ENCODE measurements at regions of chr12 and their contacts with region 1.

Region 1: GRCh38 chr12:10395390-10395998 is 5.7 kb upstream of the KLRK1 start:
- DNase-seq: peak in 3 of 9 experiments; percentile 32 to 89 (median 78)
- ATAC-seq: peak; percentile 66
- H3K4me3 ChIP-seq: peak overlapping the region; percentile 30 to 37
- H3K4me3 Mint-ChIP-seq: peak overlapping the region; percentile 63
- H3K27ac ChIP-seq: peak overlapping the region; percentile 95 to 97
- H3K27ac Mint-ChIP-seq: peak overlapping the region; percentile 96
- H3K4me1 ChIP-seq: peaks cover 88% of the 10 kb centered on the region
- H3K4me1 Mint-ChIP-seq: peaks cover 68% of the 10 kb centered on the region
- H3K27me3 ChIP-seq: no peaks in the 10 kb centered on the region
- H3K27me3 Mint-ChIP-seq: no peaks in the 10 kb centered on the region
- CTCF ChIP-seq: no peak

Region 2: DNA sequence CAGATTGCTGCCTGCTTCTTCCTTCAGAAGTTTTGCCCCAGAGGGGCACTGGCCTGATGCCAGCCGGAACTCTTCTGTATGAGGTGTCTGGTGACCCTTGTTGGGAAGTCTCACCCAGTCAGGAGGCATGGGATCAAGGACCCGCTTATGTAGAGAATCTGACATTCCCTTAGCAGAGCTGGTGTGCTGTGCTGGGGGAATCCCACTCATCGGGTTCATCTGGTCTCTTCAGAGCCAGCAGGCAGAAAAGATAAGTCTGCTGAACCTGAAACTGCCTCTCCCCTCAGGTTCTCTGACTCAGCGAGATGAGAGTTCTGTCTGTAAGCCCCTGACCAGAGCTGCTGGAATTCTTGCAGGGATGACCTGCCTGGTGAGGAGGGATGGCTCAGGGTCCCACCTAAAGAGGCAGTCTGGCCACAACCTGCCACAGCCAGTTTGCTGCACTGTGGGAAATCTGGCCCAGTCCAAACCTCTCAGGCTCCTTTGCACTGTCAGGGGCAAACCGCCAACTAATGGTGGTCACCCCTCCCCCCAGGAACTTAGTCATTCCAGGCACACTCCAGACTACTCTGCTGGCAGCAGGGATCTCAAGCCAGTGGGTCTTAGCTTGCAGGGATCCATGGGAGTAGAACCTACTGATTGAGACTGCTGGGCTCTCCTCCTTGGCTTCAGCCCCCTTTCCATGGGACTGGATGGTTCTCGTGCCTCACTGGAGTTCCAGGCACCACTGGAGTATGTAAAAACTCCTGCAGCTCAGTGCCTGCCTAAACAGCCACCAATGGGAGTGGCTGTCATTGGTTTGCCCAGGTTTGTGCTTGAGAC is 721.9 kb before region 1 on chr12:
- CTCF ChIA-PET with region 1: no interaction called
- POLR2A ChIA-PET with region 1: no interaction called
- intact Hi-C with region 1: loop called (anchors 10 kb)
- DNase-seq: peak in 7 of 9 experiments; percentile 44 to 82 (median 63)
- ATAC-seq: peak; percentile 37
- H3K4me3 ChIP-seq: peak overlapping the region; percentile 50 to 68
- H3K4me3 Mint-ChIP-seq: peak overlapping the region; percentile 88
- H3K27ac ChIP-seq: peak overlapping the region; percentile 42 to 74
- H3K27ac Mint-ChIP-seq: peak overlapping the region; percentile 95
- H3K4me1 ChIP-seq: peaks cover 44% of the 10 kb centered on the region
- H3K4me1 Mint-ChIP-seq: peaks cover 76% of the 10 kb centered on the region
- H3K27me3 ChIP-seq: no peaks in the 10 kb centered on the region
- H3K27me3 Mint-ChIP-seq: no peaks in the 10 kb centered on the region
- CTCF ChIP-seq: no peak

Region 3: DNA sequence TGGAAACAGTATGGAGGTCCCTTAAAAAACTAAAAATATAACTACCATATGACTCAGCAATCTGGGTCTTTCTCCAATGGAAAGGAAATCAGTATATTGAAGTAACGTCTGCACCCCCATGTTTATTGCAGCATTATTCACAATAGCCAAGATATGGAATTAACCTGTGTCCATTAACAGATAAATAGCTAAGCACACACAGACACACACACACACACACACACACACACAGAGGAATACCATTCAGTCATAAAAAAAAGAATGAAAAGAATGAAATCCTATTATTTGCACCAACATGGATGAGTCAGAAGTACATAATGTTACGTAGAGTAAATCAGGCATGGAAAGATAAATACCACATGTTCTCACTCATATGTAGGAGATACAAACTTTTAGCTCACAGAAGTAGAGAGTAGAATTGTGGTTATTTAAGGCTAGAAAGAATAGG is 10.3 kb before region 1 on chr12:
- CTCF ChIA-PET with region 1: interaction called, 4 read pairs
- POLR2A ChIA-PET with region 1: interaction called, 23 read pairs
- intact Hi-C with region 1: loop called in 1 of 2 experiments (anchors 1 kb)
- DNase-seq: peak in 1 of 9 experiments; percentile 57
- ATAC-seq: peak; percentile 57
- H3K4me3 ChIP-seq: peak overlapping the region; percentile 61 to 68
- H3K4me3 Mint-ChIP-seq: peak overlapping the region; percentile 87
- H3K27ac ChIP-seq: peak overlapping the region; percentile 50 to 97
- H3K27ac Mint-ChIP-seq: peak overlapping the region; percentile 92
- H3K4me1 ChIP-seq: peaks cover 25% of the 10 kb centered on the region
- H3K4me1 Mint-ChIP-seq: peaks cover 58% of the 10 kb centered on the region
- H3K27me3 ChIP-seq: no peaks in the 10 kb centered on the region
- H3K27me3 Mint-ChIP-seq: no peaks in the 10 kb centered on the region
- CTCF ChIP-seq: no peak

Region 4: DNA sequence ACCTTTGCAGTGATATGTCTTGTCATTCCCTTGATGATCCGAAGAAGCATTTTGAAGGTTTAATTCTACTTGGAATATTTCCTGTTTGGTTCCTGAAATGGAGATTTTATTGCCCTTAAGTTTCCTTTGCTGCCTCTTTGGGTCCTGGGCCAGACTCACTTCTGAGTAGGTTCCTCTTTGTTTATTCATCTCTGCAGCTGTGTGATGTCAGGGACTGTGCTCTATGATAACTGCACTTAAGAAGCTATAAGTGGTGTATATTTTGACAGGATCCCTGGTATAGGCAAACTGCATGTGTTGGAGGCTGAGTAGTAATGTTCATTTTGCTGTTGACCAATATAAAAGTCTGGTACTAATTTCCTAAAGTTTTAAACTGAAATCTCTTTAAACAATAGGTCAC is 13.9 kb after region 1 on chr12 and contains the start of gene KLRC4:
- CTCF ChIA-PET with region 1: no interaction called
- POLR2A ChIA-PET with region 1: interaction called, 13 read pairs
- intact Hi-C with region 1: loop called in 1 of 2 experiments (anchors 1 kb)
- DNase-seq: peak in 5 of 9 experiments; percentile 19 to 56 (median 37)
- ATAC-seq: peak; percentile 75
- H3K4me3 ChIP-seq: peak within 1 kb of the TSS; percentile 23 to 62
- H3K4me3 Mint-ChIP-seq: peak within 1 kb of the TSS; percentile 86
- H3K27ac ChIP-seq: peak within 1 kb of the TSS in 1 of 2 experiments; percentile 66
- H3K27ac Mint-ChIP-seq: peak within 1 kb of the TSS; percentile 89
- H3K4me1 ChIP-seq: peaks cover 15% of the 10 kb centered on the region
- H3K4me1 Mint-ChIP-seq: peaks cover 26% of the 10 kb centered on the region
- H3K27me3 ChIP-seq: no peaks in the 10 kb centered on the region
- H3K27me3 Mint-ChIP-seq: no peaks in the 10 kb centered on the region
- CTCF ChIP-seq: no peak
- total RNA-seq, gene KLRC4: 14.3 to 16.0 TPM

Region 5: GRCh38 chr12:10501031-10501430 is 105.5 kb after region 1 on chr12:
- CTCF ChIA-PET with region 1: interaction called, 3 read pairs
- POLR2A ChIA-PET with region 1: interaction called, 3 read pairs
- intact Hi-C with region 1: loop called in 1 of 2 experiments (anchors 2 kb)
- DNase-seq: peak in 2 of 9 experiments; percentile 36 to 59
- ATAC-seq: no peak
- H3K4me3 ChIP-seq: no peak overlapping the region
- H3K4me3 Mint-ChIP-seq: peak overlapping the region; percentile 57
- H3K27ac ChIP-seq: no peak overlapping the region
- H3K27ac Mint-ChIP-seq: peak overlapping the region; percentile 82
- H3K4me1 ChIP-seq: peaks cover 56% of the 10 kb centered on the region
- H3K4me1 Mint-ChIP-seq: peaks cover 51% of the 10 kb centered on the region
- H3K27me3 ChIP-seq: no peaks in the 10 kb centered on the region
- H3K27me3 Mint-ChIP-seq: no peaks in the 10 kb centered on the region
- CTCF ChIP-seq: no peak

Region 6: DNA sequence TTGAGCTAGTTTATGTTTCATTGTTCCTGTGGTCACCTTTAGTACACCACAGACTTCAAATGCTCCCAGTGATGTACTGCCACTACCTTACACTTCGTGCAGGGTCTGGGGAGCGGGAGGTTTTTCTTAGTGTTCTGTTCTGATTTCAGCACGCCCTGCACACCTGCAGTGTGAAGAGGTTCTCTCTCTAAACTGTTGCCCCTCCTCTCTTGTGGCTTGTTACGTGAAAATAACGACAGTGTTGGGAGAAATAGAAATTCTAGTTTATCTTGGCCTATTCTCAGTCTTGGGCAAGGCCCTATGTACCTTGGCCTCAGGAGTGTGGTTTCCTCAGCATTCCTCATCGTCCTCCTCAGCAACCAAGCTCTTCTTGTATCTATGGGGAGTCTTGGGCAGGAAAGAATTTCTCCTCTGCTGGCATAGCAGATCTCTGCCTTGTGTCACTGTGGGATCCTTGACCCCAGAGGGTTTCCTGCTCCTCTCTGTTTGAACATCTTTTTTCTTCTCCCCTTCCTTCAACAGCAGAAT is 158.8 kb after region 1 on chr12:
- CTCF ChIA-PET with region 1: interaction called, 5 read pairs
- POLR2A ChIA-PET with region 1: interaction called, 66 read pairs
- intact Hi-C with region 1: loop called in 1 of 2 experiments (anchors 2 kb)
- DNase-seq: peak in 8 of 9 experiments; percentile 29 to 85 (median 70)
- ATAC-seq: peak; percentile 64
- H3K4me3 ChIP-seq: peak overlapping the region; percentile 61 to 64
- H3K4me3 Mint-ChIP-seq: peak overlapping the region; percentile 90
- H3K27ac ChIP-seq: peak overlapping the region; percentile 80 to 95
- H3K27ac Mint-ChIP-seq: peak overlapping the region; percentile 100
- H3K4me1 ChIP-seq: peaks cover 32% of the 10 kb centered on the region
- H3K4me1 Mint-ChIP-seq: peaks cover 61% of the 10 kb centered on the region
- H3K27me3 ChIP-seq: no peaks in the 10 kb centered on the region
- H3K27me3 Mint-ChIP-seq: no peaks in the 10 kb centered on the region
- CTCF ChIP-seq: no peak

Region 7: DNA sequence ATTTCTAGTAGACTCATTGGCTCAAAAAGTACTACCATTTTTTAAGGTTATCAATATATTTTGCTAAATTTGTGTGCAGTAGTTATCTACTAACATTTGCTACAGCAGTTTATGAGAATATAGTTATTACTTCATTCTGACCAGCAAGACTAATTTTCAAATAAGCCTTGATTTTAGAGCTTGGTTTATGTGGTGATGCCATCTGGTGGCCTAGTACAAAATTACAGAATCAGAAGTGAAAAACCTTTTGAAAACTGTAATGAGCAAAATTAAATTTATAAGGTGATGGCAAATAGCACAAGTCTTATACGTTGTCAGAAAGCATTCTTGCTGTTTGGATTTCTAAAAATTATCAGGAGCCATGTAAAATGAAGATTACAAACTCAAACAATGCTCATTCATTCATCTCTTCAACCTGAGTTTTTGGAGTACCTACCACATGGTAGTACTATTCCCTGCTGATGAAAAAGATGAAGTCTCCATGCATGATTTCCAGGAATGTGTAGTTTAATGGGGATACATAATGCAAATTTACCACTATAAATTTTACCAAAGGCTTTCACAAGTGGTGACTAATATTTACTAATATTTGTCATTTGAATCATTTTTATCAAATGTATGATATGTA is 166.9 kb after region 1 on chr12:
- CTCF ChIA-PET with region 1: interaction called, 5 read pairs
- POLR2A ChIA-PET with region 1: interaction called, 11 read pairs
- intact Hi-C with region 1: loop called in 1 of 2 experiments (anchors 2 kb)
- DNase-seq: peak in 4 of 9 experiments; percentile 29 to 79 (median 62)
- ATAC-seq: no peak
- H3K4me3 ChIP-seq: no peak overlapping the region
- H3K4me3 Mint-ChIP-seq: peak overlapping the region; percentile 11
- H3K27ac ChIP-seq: no peak overlapping the region
- H3K27ac Mint-ChIP-seq: peak overlapping the region; percentile 80
- H3K4me1 ChIP-seq: peaks cover 70% of the 10 kb centered on the region
- H3K4me1 Mint-ChIP-seq: peaks cover 83% of the 10 kb centered on the region
- H3K27me3 ChIP-seq: no peaks in the 10 kb centered on the region
- H3K27me3 Mint-ChIP-seq: no peaks in the 10 kb centered on the region
- CTCF ChIP-seq: peak; percentile 98